Colonic mucosa (tissue), 4 donors: ENCODE measurements at regions of chr18 and their contacts with region 1.

Region 1: DNA sequence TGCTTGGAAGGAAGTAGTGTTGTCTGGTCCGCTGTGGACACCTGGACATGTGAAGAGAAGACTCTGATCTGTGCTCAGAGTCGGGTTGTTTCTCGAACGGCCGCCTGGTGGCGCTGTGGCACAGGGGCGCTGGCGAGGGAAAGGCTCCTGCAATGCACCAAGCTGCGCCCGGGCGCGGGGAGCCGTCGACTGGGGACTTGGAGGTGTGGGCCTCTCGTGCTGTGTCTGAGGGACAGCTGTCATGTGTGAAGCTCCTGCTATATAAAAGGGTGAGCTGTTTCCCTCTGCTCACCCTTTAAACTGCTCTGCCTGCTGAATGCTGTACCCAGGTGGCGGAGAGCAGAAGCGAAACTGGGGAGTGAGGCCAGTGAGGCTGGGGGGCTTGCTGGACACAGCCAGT is 44.0 kb downstream of the GNAL start:
- DNase-seq: peak; percentile 75
- H3K4me3 ChIP-seq: peak overlapping the region; percentile 22
- H3K27ac ChIP-seq: no peak overlapping the region
- H3K4me1 ChIP-seq: no peaks in the 10 kb centered on the region
- H3K27me3 ChIP-seq: no peaks in the 10 kb centered on the region
- CTCF ChIP-seq: peak; percentile 88

Region 2: GRCh38 chr18:11654736-11655605 is 78.1 kb before region 1 on chr18:
- intact Hi-C with region 1: loop called (anchors 10 kb)
- DNase-seq: peak; percentile 59
- H3K4me3 ChIP-seq: no peak overlapping the region
- H3K27ac ChIP-seq: no peak overlapping the region
- H3K4me1 ChIP-seq: no peaks in the 10 kb centered on the region
- H3K27me3 ChIP-seq: no peaks in the 10 kb centered on the region
- CTCF ChIP-seq: peak; percentile 73

Region 3: DNA sequence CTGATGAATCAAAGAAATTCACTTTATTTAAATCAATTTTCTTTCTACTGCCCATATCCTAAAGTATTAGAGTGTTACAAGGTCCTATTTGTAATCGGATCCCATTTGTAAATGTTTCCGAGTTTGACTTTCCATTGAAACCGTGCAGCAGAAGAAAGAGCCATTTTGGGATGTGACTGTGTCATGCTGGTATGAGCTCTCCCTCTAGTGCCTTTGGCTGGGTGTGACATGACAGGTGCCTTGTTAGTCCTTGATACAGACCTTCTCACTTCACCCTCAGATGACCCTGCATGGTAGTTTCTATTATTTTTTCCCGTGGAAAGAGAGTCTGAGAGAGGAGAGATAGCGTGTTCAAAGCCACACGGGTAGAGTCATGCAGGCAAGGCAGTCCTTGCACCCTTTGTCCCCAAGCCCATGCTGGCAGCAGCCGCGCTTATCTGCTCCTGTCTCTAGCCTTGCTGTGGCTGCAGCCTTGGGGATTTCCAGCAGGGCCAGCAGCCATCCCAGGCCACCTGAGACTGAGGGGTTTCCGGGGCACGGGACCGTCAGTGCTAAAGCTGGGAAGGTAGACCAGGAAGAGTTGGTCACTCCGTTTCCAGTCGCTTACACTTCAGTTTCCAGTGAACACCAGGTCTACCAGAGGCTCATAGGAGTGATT is 139.6 kb after region 1 on chr18:
- intact Hi-C with region 1: loop called (anchors 2 kb)
- DNase-seq: no peak
- H3K4me3 ChIP-seq: no peak overlapping the region
- H3K27ac ChIP-seq: no peak overlapping the region
- H3K4me1 ChIP-seq: no peaks in the 10 kb centered on the region
- H3K27me3 ChIP-seq: no peaks in the 10 kb centered on the region
- CTCF ChIP-seq: peak; percentile 45

Region 4: GRCh38 chr18:12031846-12032245 is 298.8 kb after region 1 on chr18:
- intact Hi-C with region 1: loop called (anchors 5 kb)
- DNase-seq: no peak
- H3K4me3 ChIP-seq: no peak overlapping the region
- H3K27ac ChIP-seq: no peak overlapping the region
- H3K4me1 ChIP-seq: no peaks in the 10 kb centered on the region
- H3K27me3 ChIP-seq: no peaks in the 10 kb centered on the region
- CTCF ChIP-seq: no peak